ENCODE measurements at regions of chr2 and their contacts with region 1.

Region 1: DNA sequence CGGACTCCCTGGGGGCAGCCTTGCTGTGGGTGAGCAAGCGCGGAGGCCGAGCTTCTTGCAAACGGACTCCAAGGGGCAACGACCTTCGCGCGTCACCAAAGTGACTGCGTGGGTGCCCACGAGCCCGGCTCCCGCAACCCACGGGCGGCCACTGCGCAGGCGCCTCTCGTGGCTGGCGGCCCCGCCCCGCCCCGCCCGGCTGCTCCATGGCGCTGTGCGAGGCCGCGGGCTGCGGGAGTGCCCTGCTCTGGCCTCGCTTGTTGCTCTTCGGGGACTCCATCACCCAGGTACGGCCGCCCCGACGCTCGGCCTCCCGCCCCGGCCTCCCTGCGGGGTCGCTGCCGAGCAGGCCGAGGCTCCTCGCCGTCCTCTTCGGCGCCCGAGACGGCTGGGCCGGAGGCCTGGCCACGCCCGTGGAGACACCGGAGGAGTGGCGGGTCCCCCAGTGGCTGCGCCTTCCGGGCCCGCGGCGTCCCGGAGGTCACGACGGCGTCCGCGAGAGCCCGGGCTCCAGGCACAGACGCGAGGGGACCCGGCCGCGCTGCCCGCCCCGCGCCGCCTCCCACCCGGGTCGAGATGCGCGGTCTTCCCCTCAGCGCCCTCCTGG is at the start of gene IAH1:
- DNase-seq: peak; percentile 40 to 79
- ATAC-seq: peak; percentile 82 to 94 (median 90)
- H3K4me3 ChIP-seq: peak within 1 kb of the TSS; percentile 59 to 95 (median 82)
- H3K27ac ChIP-seq: peak within 1 kb of the TSS; percentile 64 to 92 (median 90)
- H3K4me1 ChIP-seq: peaks cover 0 to 53% (median 29%) of the 10 kb centered on the region in 9 donors
- H3K27me3 ChIP-seq: no peaks in the 10 kb centered on the region
- CTCF ChIP-seq: peak in 4 of 9 donors; percentile 9 to 30 (median 18)
- total RNA-seq, gene IAH1: 77.1 to 94.5 (median 87.7) TPM

Region 2: GRCh38 chr2:9763356-9764152 is 289.1 kb after region 1 on chr2:
- intact Hi-C with region 1: loop called in 2 of 10 experiments (anchors 5 to 10 kb)
- DNase-seq: no peak
- ATAC-seq: peak in 5 of 8 donors; percentile 20 to 56 (median 47)
- H3K4me3 ChIP-seq: no peak overlapping the region
- H3K27ac ChIP-seq: peak overlapping the region in 7 of 10 donors; percentile 16 to 74 (median 44)
- H3K4me1 ChIP-seq: peaks cover 0 to 78% (median 38%) of the 10 kb centered on the region in 9 donors
- H3K27me3 ChIP-seq: no peaks in the 10 kb centered on the region
- CTCF ChIP-seq: no peak

Region 3: DNA sequence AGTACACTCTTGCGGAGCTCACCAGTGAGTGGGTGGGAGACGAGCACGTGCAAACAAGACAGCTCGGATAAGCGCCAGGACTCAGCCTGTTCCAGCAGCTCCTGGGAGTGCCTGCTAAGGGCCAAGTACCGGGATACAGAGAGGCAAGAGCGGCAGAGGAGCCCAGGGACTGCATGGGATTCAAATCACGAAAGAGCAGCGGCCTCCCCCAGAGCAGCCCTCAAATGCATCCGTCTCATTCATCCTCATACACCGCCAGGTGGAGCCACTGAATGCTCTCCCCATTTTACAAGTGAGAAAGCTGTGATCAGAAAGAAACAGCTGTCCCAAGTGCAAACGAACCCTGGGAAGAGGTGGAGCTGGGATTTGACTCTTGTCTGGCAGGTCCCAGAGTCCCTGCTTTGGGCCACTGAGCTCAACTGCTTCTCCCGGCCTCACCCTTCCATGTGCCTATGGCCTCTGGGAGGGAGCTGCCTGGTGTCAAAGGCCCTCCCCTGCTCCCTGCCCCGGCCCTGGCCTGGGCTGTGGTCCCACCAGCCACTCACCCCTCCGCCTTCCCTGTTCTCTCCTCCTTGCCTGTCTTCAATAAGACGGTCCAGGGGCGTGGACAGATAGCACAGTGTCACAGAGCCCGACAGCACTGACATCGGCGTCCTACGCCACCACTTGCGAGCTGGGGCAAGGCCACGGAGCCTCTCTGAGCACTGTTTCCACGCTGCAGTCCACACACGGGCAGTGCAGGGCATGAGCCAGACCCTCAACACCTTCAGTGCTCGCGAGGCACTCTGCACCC is 296.0 kb after region 1 on chr2:
- intact Hi-C with region 1: loop called in 1 of 10 experiments (anchors 10 kb)
- DNase-seq: peak in 1 of 2 donors; percentile 74
- ATAC-seq: peak; percentile 37 to 66 (median 52)
- H3K4me3 ChIP-seq: peak overlapping the region in 3 of 10 donors; percentile 6 to 19 (median 10)
- H3K27ac ChIP-seq: peak overlapping the region in 9 of 10 donors; percentile 13 to 84 (median 74)
- H3K4me1 ChIP-seq: peaks cover 17 to 75% (median 38%) of the 10 kb centered on the region in 9 donors
- H3K27me3 ChIP-seq: no peaks in the 10 kb centered on the region
- CTCF ChIP-seq: peak; percentile 51 to 84 (median 72)